Naive thymus-derived CD4-positive, alpha-beta T cell (primary cell): ENCODE measurements at regions of chr22 and their contacts with region 1.

Region 1: GRCh38 chr22:43263645-43264514 is 76.9 kb upstream of the TTLL12 start:
- DNase-seq: peak; percentile 11 to 74 (median 43)
- ATAC-seq: peak; percentile 88
- H3K4me3 ChIP-seq: peak overlapping the region; percentile 49
- H3K4me3 Mint-ChIP-seq: peak overlapping the region; percentile 74 to 90 (median 82)
- H3K27ac ChIP-seq: peak overlapping the region; percentile 0
- H3K27ac Mint-ChIP-seq: peak overlapping the region; percentile 4 to 94 (median 63)
- H3K4me1 ChIP-seq: peaks cover 14 to 23% of the 10 kb centered on the region in 2 donors
- H3K4me1 Mint-ChIP-seq: peaks cover 18 to 32% (median 21%) of the 10 kb centered on the region in 7 donors
- H3K27me3 ChIP-seq: no peaks in the 10 kb centered on the region
- H3K27me3 Mint-ChIP-seq: no peaks in the 10 kb centered on the region

Region 2: GRCh38 chr22:43230971-43231723 is 32.7 kb before region 1 on chr22:
- CTCF ChIA-PET with region 1: no interaction called
- POLR2A ChIA-PET with region 1: no interaction called
- intact Hi-C with region 1: loop called in 1 of 2 experiments (anchors 2 kb)
- DNase-seq: peak; percentile 14 to 70 (median 53)
- ATAC-seq: peak; percentile 76
- H3K4me3 ChIP-seq: no peak overlapping the region
- H3K4me3 Mint-ChIP-seq: no peak overlapping the region
- H3K27ac ChIP-seq: no peak overlapping the region
- H3K27ac Mint-ChIP-seq: no peak overlapping the region
- H3K4me1 ChIP-seq: peaks cover 0 to 6% of the 10 kb centered on the region in 2 donors
- H3K4me1 Mint-ChIP-seq: peaks cover 0 to 11% (median 5%) of the 10 kb centered on the region in 7 donors
- H3K27me3 ChIP-seq: no peaks in the 10 kb centered on the region
- H3K27me3 Mint-ChIP-seq: peaks cover 0 to 5% (median 0%) of the 10 kb centered on the region in 5 donors

Region 3: DNA sequence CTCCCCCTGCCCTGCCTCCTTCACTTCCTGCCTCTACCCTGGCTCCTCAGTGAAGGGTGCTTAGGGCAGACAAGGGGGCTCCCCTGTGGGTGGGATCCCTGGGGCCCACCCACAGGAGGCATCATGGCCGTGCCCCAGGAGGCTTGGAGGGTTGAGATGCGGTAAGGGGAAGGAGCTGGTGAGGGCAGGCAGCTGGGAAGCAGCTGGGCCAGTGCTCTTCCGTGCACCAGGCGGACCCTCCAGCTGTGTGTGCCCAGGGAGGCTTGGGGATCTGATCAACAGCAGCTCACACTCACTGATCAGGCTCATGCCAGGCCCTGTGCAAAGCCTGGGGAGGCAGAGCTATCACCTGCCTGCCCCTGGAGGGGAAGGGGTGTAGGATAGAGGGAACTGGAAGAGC is 17.7 kb before region 1 on chr22:
- CTCF ChIA-PET with region 1: no interaction called
- POLR2A ChIA-PET with region 1: no interaction called
- intact Hi-C with region 1: no loop called
- DNase-seq: no peak
- ATAC-seq: no peak
- H3K4me3 ChIP-seq: no peak overlapping the region
- H3K4me3 Mint-ChIP-seq: no peak overlapping the region
- H3K27ac ChIP-seq: no peak overlapping the region
- H3K27ac Mint-ChIP-seq: no peak overlapping the region
- H3K4me1 ChIP-seq: no peaks in the 10 kb centered on the region
- H3K4me1 Mint-ChIP-seq: no peaks in the 10 kb centered on the region
- H3K27me3 ChIP-seq: no peaks in the 10 kb centered on the region
- H3K27me3 Mint-ChIP-seq: no peaks in the 10 kb centered on the region